GM12878 (cell line): ENCODE measurements at regions of chr18 and their contacts with region 1.

Region 1: DNA sequence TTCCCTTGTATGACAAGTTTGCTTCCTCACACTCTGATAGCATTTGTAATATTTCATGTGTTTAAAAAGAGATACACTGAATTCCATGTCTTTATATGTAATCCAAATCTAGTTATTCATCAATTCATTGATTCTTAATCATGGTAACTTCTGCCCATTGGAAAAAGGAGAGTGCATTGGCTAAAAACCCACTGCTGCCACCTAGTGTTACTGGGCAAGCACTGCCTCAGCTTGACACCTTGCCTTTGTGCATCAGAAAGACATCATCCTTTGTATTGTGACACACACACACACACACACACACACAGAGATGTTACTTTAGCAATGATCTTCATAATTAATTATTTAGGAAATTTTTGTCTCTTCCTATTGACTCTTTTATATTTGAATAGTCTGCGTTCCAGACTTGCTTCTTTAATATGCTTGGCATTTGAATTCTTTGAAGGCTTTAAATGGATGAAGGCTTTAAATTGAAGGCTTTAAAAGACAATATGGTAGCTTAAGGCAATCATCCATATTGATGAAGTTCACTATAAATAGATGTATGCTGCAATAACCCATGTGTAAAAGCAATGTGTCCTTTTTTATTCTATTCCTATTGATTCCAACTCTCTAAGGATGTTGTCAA is 414.2 kb upstream of the CHST9 start:
- DNase-seq: no peak
- ATAC-seq: peak; percentile 88
- H3K4me3 ChIP-seq: no peak overlapping the region
- H3K27ac ChIP-seq: no peak overlapping the region
- H3K4me1 ChIP-seq: no peaks in the 10 kb centered on the region
- H3K27me3 ChIP-seq: no peaks in the 10 kb centered on the region
- CTCF ChIP-seq: peak; percentile 87 to 95 (median 87)
- EP300 ChIP-seq: no peak
- POLR2A ChIP-seq: no peak
- RAD21 ChIP-seq: peak; percentile 79

Region 2: GRCh38 chr18:27017901-27018500 is 581.3 kb before region 1 on chr18:
- CTCF ChIA-PET with region 1: interaction called, 9 read pairs
- POLR2A ChIA-PET with region 1: no interaction called
- RAD21 ChIA-PET with region 1: interaction called, 7 read pairs
- SMC1A ChIA-PET with region 1: interaction called, 7 read pairs
- in situ Hi-C with region 1: no loop called
- intact Hi-C with region 1: loop called (anchors 1 kb)
- DNase-seq: no peak
- ATAC-seq: peak; percentile 66
- H3K4me3 ChIP-seq: no peak overlapping the region
- H3K27ac ChIP-seq: no peak overlapping the region
- H3K4me1 ChIP-seq: no peaks in the 10 kb centered on the region
- H3K27me3 ChIP-seq: no peaks in the 10 kb centered on the region
- CTCF ChIP-seq: peak; percentile 47 to 54 (median 54); a peak in 5 of 6 replicates
- EP300 ChIP-seq: no peak
- POLR2A ChIP-seq: no peak
- RAD21 ChIP-seq: peak; percentile 82

Region 3: DNA sequence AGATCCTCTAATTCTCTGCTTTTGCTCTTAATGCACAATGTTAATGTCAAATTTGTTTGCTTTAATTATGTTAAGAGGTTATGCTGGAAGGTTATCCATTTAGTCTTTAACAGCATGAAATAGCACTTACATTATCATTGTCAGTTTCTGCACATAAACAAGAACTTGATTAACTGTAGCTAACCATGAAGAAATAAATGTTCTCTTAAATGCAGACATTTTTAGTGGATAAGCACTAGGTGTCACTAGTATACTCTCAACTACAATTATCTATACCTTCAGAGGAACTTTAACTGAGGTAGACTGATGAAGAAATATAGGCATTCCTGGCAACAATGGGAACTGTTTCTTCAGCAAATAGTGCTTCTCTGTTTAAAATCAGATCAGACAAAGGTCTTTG is 235.4 kb before region 1 on chr18:
- CTCF ChIA-PET with region 1: interaction called, 23 read pairs
- POLR2A ChIA-PET with region 1: no interaction called
- RAD21 ChIA-PET with region 1: interaction called, 27 read pairs
- SMC1A ChIA-PET with region 1: interaction called, 3 read pairs
- in situ Hi-C with region 1: loop called (anchors 10 kb)
- intact Hi-C with region 1: loop called (anchors 1 kb)
- DNase-seq: no peak
- ATAC-seq: peak; percentile 58; the same call in 2 of the 3 replicates
- H3K4me3 ChIP-seq: no peak overlapping the region
- H3K27ac ChIP-seq: no peak overlapping the region
- H3K4me1 ChIP-seq: no peaks in the 10 kb centered on the region
- H3K27me3 ChIP-seq: no peaks in the 10 kb centered on the region
- CTCF ChIP-seq: peak in 2 of 3 experiments; percentile 10 to 11; a peak in 1 of 6 replicates
- EP300 ChIP-seq: no peak
- POLR2A ChIP-seq: no peak
- RAD21 ChIP-seq: peak; percentile 43; the same call in 1 of the 2 replicates